Activated naive CD4-positive, alpha-beta T cell treated with anti-CD3 and anti-CD28 coated beads, Interleukin-2, amount 10 ng/mL, durations not matched to agents 7 days and 5 days (primary cell): ENCODE measurements at regions of chr17 and their contacts with region 1.

Region 1: GRCh38 chr17:68260051-68260762 is 12.4 kb downstream of the AMZ2 start:
- DNase-seq: no peak
- H3K4me3 Mint-ChIP-seq: no peak overlapping the region
- H3K27ac Mint-ChIP-seq: peak overlapping the region; percentile 71
- H3K4me1 Mint-ChIP-seq: peaks cover 75% of the 10 kb centered on the region
- H3K27me3 Mint-ChIP-seq: no peaks in the 10 kb centered on the region

Region 2: DNA sequence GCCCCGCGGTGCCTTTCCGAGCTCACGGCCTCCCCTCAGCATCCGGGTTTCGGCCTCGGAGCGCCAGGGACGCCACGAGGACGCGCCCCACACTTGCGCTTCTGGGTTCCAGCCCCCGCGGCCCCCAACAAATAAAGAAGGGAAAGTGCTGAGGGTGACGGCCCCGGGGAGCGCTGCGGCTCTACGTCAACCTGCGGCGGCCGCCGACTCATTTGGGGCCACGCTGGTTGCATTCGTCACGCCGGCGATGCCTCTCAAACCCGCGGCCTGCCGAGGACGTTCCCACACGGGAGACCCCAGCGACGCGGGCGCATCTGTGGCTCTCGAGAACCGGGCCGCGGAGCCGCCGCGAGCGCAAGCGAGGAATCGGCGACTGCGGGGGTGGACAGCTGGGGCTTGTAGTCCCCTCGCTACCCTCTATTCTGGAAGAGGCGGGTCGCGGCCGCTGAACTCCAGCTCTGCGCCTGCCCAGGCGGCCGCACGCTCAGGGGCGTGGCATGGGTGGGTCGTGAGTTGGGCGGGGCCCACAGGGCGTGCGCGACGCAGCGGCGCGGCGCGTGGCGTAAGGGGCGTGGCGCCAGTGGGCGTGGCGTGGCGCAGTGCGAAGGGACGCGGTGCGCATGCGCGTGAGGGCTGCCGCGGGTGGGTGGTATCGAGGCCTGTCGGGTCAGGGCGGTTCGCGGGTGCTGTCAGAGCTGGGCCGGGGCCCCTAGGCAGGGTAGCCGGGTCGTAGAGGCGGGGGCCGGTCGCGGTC is 12.6 kb before region 1 on chr17 and contains the start of gene AMZ2:
- CTCF ChIA-PET with region 1: interaction called, 13 read pairs
- DNase-seq: peak; percentile 95
- H3K4me3 Mint-ChIP-seq: peak within 1 kb of the TSS; percentile 85
- H3K27ac Mint-ChIP-seq: peak within 1 kb of the TSS; percentile 95
- H3K4me1 Mint-ChIP-seq: peaks cover 41% of the 10 kb centered on the region
- H3K27me3 Mint-ChIP-seq: no peaks in the 10 kb centered on the region

Region 3: GRCh38 chr17:68457539-68458259 is 197.5 kb after region 1 on chr17:
- CTCF ChIA-PET with region 1: interaction called, 12 read pairs
- DNase-seq: peak; percentile 98
- H3K4me3 Mint-ChIP-seq: peak overlapping the region; percentile 77
- H3K27ac Mint-ChIP-seq: peak overlapping the region; percentile 86
- H3K4me1 Mint-ChIP-seq: peaks cover 81% of the 10 kb centered on the region
- H3K27me3 Mint-ChIP-seq: peaks cover 4% of the 10 kb centered on the region